H1 (cell line): ENCODE measurements at regions of chr1 and their contacts with region 1.

Region 1: DNA sequence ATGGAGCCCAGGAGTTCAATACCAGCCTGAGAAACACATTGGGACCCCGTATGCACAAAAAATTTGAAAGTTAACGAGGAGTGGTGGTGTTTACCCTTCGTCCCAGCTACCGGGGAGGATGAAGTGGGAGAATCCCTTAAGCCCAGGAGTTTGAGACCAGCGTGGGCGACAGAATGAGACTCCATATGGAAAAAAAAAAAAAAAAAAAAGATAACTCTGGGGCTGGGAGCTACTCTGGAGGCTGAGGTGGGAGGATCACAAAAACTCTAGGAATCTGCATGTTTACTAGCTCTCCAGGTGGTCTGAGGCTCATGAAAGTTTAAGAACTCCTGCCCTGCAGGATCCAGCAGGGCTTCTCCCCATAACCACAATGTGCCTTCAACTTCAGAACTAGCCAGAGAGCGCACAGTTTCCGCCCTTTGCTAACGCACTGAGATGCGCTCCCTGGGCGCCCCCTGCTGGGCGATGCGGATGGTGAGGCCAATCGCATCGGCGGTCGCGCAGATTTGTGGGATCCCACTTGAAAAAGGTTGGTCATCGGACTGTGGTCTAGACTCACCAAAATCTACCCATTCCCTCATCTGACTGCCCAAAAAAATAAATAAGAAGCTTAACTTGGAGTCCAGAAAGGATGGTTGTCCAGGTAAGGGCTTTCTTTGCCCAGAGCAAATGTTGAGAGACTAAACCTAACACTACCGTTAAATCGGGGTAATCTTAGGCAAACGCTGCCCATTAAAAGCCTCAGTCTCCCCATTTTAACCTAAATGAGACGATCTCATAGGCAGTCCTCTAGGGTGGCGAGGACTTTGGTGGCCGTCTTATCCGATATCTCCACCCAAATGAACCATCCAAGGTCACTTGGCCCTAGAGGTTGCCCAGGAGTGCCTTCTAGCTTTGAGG is 8.8 kb downstream of the ZNF683 start:
- DNase-seq: peak; percentile 50 to 97
- H3K4me3 ChIP-seq: no peak overlapping the region
- H3K27ac ChIP-seq: no peak overlapping the region
- H3K4me1 ChIP-seq: peaks cover 4 to 14% (median 10%) of the 10 kb centered on the region in 4 experiments
- H3K27me3 ChIP-seq: peaks cover 0 to 17% (median 11%) of the 10 kb centered on the region in 4 experiments; a peak in 4 of 7 replicates
- CTCF ChIP-seq: peak; percentile 93 to 96 (median 93)
- EP300 ChIP-seq: no peak
- POLR2A ChIP-seq: no peak
- RAD21 ChIP-seq: peak; percentile 81 to 89

Region 2: DNA sequence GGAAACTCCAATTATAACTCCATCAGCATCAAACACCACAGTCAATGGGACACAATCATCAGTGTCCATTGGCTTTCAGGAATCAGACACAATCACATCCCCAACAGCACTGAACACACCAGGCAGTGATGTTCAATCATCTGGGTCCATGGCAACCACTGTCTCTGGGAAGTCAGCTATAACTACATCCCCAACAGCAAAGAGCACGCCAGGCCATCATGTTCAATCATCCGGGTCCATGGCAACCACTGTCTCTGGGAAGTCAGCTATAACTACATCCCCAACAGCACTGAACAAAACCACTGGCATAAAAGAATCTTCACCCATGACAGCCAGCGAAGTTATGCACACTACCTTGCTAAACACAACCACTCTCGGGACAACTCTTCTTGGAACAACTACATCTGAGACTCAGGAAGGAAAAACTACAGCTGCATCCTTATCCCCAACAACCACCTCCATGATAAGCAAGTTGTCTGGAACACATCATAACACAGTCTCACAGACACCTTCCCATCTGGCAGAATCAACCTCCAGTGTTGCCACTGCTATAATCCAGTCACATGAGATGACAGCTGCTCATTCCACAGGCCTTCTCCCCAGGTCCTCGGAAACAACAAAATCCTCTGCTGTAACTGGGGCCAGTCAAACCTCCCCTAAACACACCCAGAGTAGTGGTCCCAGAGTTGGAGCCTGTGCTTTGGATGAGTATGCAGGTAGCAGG is 153.5 kb before region 1 on chr1:
- CTCF ChIA-PET with region 1: no interaction called
- POLR2A ChIA-PET with region 1: no interaction called
- DNase-seq: no peak
- H3K4me3 ChIP-seq: no peak overlapping the region
- H3K27ac ChIP-seq: no peak overlapping the region
- H3K4me1 ChIP-seq: no peaks in the 10 kb centered on the region
- H3K27me3 ChIP-seq: no peaks in the 10 kb centered on the region
- CTCF ChIP-seq: no peak
- EP300 ChIP-seq: no peak
- POLR2A ChIP-seq: no peak
- RAD21 ChIP-seq: no peak

Region 3: GRCh38 chr1:26279456-26280332 is 84.1 kb before region 1 on chr1 and contains the start of gene SH3BGRL3:
- CTCF ChIA-PET with region 1: interaction called, 297 read pairs
- POLR2A ChIA-PET with region 1: interaction called, 8 read pairs
- DNase-seq: peak in 1 of 2 experiments; percentile 85
- H3K4me3 ChIP-seq: peak within 1 kb of the TSS; percentile 64 to 69 (median 64)
- H3K27ac ChIP-seq: peak within 1 kb of the TSS; percentile 26; the same call in 1 of the 2 replicates
- H3K4me1 ChIP-seq: peaks cover 10 to 34% (median 21%) of the 10 kb centered on the region in 4 experiments
- H3K27me3 ChIP-seq: no peaks in the 10 kb centered on the region
- CTCF ChIP-seq: peak in 2 of 3 experiments; percentile 57 to 75; a peak in 3 of 4 replicates
- EP300 ChIP-seq: no peak
- POLR2A ChIP-seq: peak in 1 of 2 experiments; percentile 63; a peak in 1 of 3 replicates
- RAD21 ChIP-seq: peak; percentile 48 to 51
- total RNA-seq, gene SH3BGRL3: 77.8 and 84.4 TPM in 2 replicates

Region 4: GRCh38 chr1:26321315-26322041 is 42.3 kb before region 1 on chr1:
- CTCF ChIA-PET with region 1: interaction called, 139 read pairs
- POLR2A ChIA-PET with region 1: interaction called, 5 read pairs
- DNase-seq: peak; percentile 64 to 100
- H3K4me3 ChIP-seq: no peak overlapping the region
- H3K27ac ChIP-seq: no peak overlapping the region
- H3K4me1 ChIP-seq: peaks cover 4 to 8% (median 6%) of the 10 kb centered on the region in 4 experiments
- H3K27me3 ChIP-seq: no peaks in the 10 kb centered on the region
- CTCF ChIP-seq: peak; percentile 83 to 97 (median 92)
- EP300 ChIP-seq: no peak
- POLR2A ChIP-seq: no peak
- RAD21 ChIP-seq: peak; percentile 96 to 98

Region 5: GRCh38 chr1:26351591-26352337 is 12.0 kb before region 1 on chr1:
- CTCF ChIA-PET with region 1: interaction called, 52 read pairs
- POLR2A ChIA-PET with region 1: interaction called, 20 read pairs
- DNase-seq: no peak
- H3K4me3 ChIP-seq: no peak overlapping the region
- H3K27ac ChIP-seq: no peak overlapping the region
- H3K4me1 ChIP-seq: peaks cover 7 to 28% (median 10%) of the 10 kb centered on the region in 4 experiments
- H3K27me3 ChIP-seq: no peaks in the 10 kb centered on the region
- CTCF ChIP-seq: no peak
- EP300 ChIP-seq: no peak
- POLR2A ChIP-seq: no peak
- RAD21 ChIP-seq: no peak

Region 6: DNA sequence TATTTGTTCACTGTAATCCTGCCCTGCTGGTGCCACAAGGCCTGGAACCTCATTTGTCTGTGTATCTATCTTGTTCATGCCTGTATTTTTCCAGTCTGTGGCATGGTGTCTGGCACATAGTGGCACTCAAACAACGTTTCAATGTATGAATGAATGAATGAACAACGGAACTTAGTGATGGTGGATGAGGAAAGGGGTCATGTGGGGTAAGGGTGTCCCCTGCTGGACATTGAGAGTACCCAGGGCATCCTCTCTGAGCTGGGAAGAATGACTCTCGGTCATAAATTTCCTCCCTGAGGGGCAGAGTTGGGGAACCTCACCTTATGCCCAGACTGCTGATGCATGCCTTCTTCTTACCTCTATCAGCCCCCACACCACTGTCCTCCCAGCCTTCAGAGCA is 27.7 kb after region 1 on chr1:
- CTCF ChIA-PET with region 1: interaction called, 33 read pairs
- POLR2A ChIA-PET with region 1: interaction called, 3 read pairs
- DNase-seq: no peak
- H3K4me3 ChIP-seq: no peak overlapping the region
- H3K27ac ChIP-seq: no peak overlapping the region
- H3K4me1 ChIP-seq: peaks cover 1 to 10% (median 3%) of the 10 kb centered on the region in 4 experiments; a peak in 6 of 7 replicates
- H3K27me3 ChIP-seq: no peaks in the 10 kb centered on the region
- CTCF ChIP-seq: peak; percentile 81 to 93 (median 83)
- EP300 ChIP-seq: no peak
- POLR2A ChIP-seq: no peak
- RAD21 ChIP-seq: peak; percentile 94

Region 7: GRCh38 chr1:26417111-26417759 is 53.4 kb after region 1 on chr1:
- CTCF ChIA-PET with region 1: interaction called, 30 read pairs
- POLR2A ChIA-PET with region 1: interaction called, 36 read pairs
- DNase-seq: peak; percentile 85 to 94
- H3K4me3 ChIP-seq: peak overlapping the region in 2 of 4 experiments; percentile 11 to 52; a peak in 4 of 8 replicates
- H3K27ac ChIP-seq: peak overlapping the region; percentile 63; the same call in 1 of the 2 replicates
- H3K4me1 ChIP-seq: peaks cover 24 to 47% (median 35%) of the 10 kb centered on the region in 4 experiments
- H3K27me3 ChIP-seq: no peaks in the 10 kb centered on the region
- CTCF ChIP-seq: peak; percentile 92 to 98 (median 96)
- EP300 ChIP-seq: no peak; a peak in 1 of 3 replicates
- POLR2A ChIP-seq: peak in 1 of 2 experiments; percentile 58; a peak in 1 of 3 replicates
- RAD21 ChIP-seq: peak; percentile 79 to 90

Region 8: GRCh38 chr1:26630634-26631033 is 266.8 kb after region 1 on chr1:
- CTCF ChIA-PET with region 1: no interaction called
- POLR2A ChIA-PET with region 1: no interaction called
- DNase-seq: no peak
- H3K4me3 ChIP-seq: no peak overlapping the region
- H3K27ac ChIP-seq: no peak overlapping the region
- H3K4me1 ChIP-seq: no peaks in the 10 kb centered on the region
- H3K27me3 ChIP-seq: no peaks in the 10 kb centered on the region
- CTCF ChIP-seq: no peak
- EP300 ChIP-seq: no peak
- POLR2A ChIP-seq: no peak
- RAD21 ChIP-seq: no peak